PC-3 (cell line): ENCODE measurements at regions of chr3 and their contacts with region 1.

Region 1: GRCh38 chr3:109731620-109732473 is 394.5 kb upstream of the DPPA4 start:
- DNase-seq: peak; percentile 84
- ATAC-seq: peak; percentile 85
- H3K4me3 ChIP-seq: no peak overlapping the region
- H3K27ac ChIP-seq: no peak overlapping the region
- H3K4me1 ChIP-seq: no peaks in the 10 kb centered on the region
- H3K27me3 ChIP-seq: no peaks in the 10 kb centered on the region
- CTCF ChIP-seq: peak; percentile 93

Region 2: DNA sequence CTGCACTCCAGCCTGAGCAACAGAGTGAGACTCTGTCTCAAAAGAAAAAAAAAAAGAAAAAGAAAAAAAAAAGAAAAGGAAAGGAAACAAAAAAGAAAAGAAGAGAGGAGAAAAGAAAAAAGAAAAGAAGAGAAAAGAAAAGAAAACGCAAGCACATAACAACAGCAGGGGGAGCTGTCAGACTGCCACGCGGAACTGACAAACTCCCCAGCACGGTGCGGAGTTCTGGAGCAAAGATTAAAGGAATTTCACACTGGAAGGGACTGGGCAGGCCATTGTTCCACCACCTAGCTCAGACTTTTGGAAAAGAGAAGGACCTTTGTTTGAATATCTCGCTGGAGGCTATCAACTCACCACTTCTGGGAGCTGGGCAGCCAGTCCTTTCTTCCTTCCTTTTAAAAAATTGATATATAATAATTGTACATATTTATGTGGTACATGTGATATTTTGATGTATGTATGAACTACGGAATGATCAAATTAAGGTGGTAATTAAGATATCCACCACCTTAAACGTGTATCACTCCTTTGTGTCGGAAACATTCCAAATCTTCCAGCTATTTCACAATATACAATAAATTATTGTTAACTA is 456.0 kb before region 1 on chr3:
- CTCF ChIA-PET with region 1: no interaction called
- POLR2A ChIA-PET with region 1: no interaction called
- intact Hi-C with region 1: loop called (anchors 10 kb)
- DNase-seq: peak; percentile 63
- ATAC-seq: peak; percentile 71
- H3K4me3 ChIP-seq: no peak overlapping the region
- H3K27ac ChIP-seq: no peak overlapping the region
- H3K4me1 ChIP-seq: no peaks in the 10 kb centered on the region
- H3K27me3 ChIP-seq: peaks cover 7% of the 10 kb centered on the region; the same call in 1 of the 2 replicates
- CTCF ChIP-seq: peak; percentile 80

Region 3: GRCh38 chr3:110164632-110165369 is 433.0 kb after region 1 on chr3:
- CTCF ChIA-PET with region 1: no interaction called
- POLR2A ChIA-PET with region 1: no interaction called
- intact Hi-C with region 1: loop called (anchors 10 kb)
- DNase-seq: no peak
- ATAC-seq: no peak; the same call in 1 of the 2 replicates
- H3K4me3 ChIP-seq: no peak overlapping the region
- H3K27ac ChIP-seq: 0 out of 2 replicates have a peak overlapping the region, but pooled peaks have one; percentile 4
- H3K4me1 ChIP-seq: no peaks in the 10 kb centered on the region
- H3K27me3 ChIP-seq: no peaks in the 10 kb centered on the region
- CTCF ChIP-seq: no peak

Region 4: DNA sequence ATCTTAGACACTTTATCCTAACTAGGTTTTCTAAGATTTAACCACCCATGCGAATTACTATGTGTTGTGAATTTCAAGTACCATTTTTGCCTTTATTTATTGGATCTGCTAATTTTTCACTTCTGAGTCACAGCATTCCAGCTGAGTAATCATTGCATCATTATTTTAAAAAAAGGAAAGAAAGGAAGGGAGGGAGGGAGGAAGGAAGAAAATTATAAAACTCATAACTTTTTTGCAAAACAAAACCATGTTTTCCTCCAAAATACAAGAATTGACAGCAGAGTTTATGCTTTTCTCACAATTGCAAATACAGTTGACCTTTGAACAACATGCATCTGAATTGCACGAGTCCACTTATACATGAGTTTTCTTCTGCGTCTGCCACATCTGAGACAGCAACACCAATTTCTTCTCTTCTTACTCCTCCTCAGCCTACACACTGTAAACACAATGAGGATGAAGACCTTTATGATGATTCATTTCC is 688.4 kb after region 1 on chr3:
- CTCF ChIA-PET with region 1: no interaction called
- POLR2A ChIA-PET with region 1: no interaction called
- intact Hi-C with region 1: loop called (anchors 2 kb)
- DNase-seq: peak; percentile 94
- ATAC-seq: peak; percentile 93
- H3K4me3 ChIP-seq: peak overlapping the region; percentile 58
- H3K27ac ChIP-seq: peak overlapping the region; percentile 74
- H3K4me1 ChIP-seq: peaks cover 31% of the 10 kb centered on the region
- H3K27me3 ChIP-seq: no peaks in the 10 kb centered on the region
- CTCF ChIP-seq: no peak

Region 5: DNA sequence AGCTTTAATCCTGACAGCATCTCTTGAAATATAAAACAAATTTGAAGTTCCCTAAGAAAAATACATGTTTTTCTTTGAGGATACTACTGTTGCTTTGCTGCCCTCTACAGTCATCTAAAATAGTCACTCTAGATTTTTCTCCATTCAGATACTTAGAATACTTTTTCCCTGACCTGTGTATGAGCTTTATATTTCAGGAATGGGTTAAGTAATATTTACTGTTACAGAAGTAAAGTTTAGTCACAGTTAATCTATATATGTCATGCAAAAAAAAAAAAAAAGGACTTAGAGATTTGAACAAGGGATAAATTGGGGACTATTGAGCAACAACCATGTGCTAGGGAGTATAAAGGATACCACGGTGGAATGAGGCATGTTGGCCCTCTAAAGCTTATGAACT is 1348.6 kb after region 1 on chr3:
- CTCF ChIA-PET with region 1: no interaction called
- POLR2A ChIA-PET with region 1: no interaction called
- intact Hi-C with region 1: loop called (anchors 1 kb)
- DNase-seq: peak; percentile 70
- ATAC-seq: peak; percentile 61
- H3K4me3 ChIP-seq: no peak overlapping the region
- H3K27ac ChIP-seq: no peak overlapping the region
- H3K4me1 ChIP-seq: peaks cover 9% of the 10 kb centered on the region
- H3K27me3 ChIP-seq: no peaks in the 10 kb centered on the region
- CTCF ChIP-seq: peak; percentile 75